Activated CD4-positive, alpha-beta T cell treated with anti-CD3 and anti-CD28 coated beads, Interleukin-2, amount 10 ng/mL, durations not matched to agents 7 days and 5 days (primary cell): ENCODE measurements at regions of chr6 and their contacts with region 1.

Region 1: GRCh38 chr6:166976636-166977035 is 20.3 kb upstream of the RNASET2 start:
- DNase-seq: no peak
- H3K4me3 Mint-ChIP-seq: no peak overlapping the region
- H3K27ac Mint-ChIP-seq: no peak overlapping the region
- H3K4me1 Mint-ChIP-seq: peaks cover 2% of the 10 kb centered on the region
- H3K27me3 Mint-ChIP-seq: no peaks in the 10 kb centered on the region

Region 2: GRCh38 chr6:166728957-166729441 is 247.6 kb before region 1 on chr6:
- CTCF ChIA-PET with region 1: no interaction called
- POLR2A ChIA-PET with region 1: no interaction called
- DNase-seq: no peak
- H3K4me3 Mint-ChIP-seq: no peak overlapping the region
- H3K27ac Mint-ChIP-seq: no peak overlapping the region
- H3K4me1 Mint-ChIP-seq: peaks cover 10% of the 10 kb centered on the region
- H3K27me3 Mint-ChIP-seq: no peaks in the 10 kb centered on the region

Region 3: GRCh38 chr6:166989427-166990032 is 12.9 kb after region 1 on chr6:
- CTCF ChIA-PET with region 1: interaction called, 10 read pairs
- POLR2A ChIA-PET with region 1: no interaction called
- DNase-seq: peak; percentile 23
- H3K4me3 Mint-ChIP-seq: no peak overlapping the region
- H3K27ac Mint-ChIP-seq: peak overlapping the region; percentile 37
- H3K4me1 Mint-ChIP-seq: peaks cover 21% of the 10 kb centered on the region
- H3K27me3 Mint-ChIP-seq: no peaks in the 10 kb centered on the region

Region 4: GRCh38 chr6:167005350-167006159 is 28.9 kb after region 1 on chr6:
- CTCF ChIA-PET with region 1: no interaction called
- POLR2A ChIA-PET with region 1: no interaction called
- DNase-seq: no peak
- H3K4me3 Mint-ChIP-seq: no peak overlapping the region
- H3K27ac Mint-ChIP-seq: no peak overlapping the region
- H3K4me1 Mint-ChIP-seq: peaks cover 15% of the 10 kb centered on the region
- H3K27me3 Mint-ChIP-seq: no peaks in the 10 kb centered on the region